AG04449 (cell line): ENCODE measurements at regions of chr10 and their contacts with region 1.

Region 1: DNA sequence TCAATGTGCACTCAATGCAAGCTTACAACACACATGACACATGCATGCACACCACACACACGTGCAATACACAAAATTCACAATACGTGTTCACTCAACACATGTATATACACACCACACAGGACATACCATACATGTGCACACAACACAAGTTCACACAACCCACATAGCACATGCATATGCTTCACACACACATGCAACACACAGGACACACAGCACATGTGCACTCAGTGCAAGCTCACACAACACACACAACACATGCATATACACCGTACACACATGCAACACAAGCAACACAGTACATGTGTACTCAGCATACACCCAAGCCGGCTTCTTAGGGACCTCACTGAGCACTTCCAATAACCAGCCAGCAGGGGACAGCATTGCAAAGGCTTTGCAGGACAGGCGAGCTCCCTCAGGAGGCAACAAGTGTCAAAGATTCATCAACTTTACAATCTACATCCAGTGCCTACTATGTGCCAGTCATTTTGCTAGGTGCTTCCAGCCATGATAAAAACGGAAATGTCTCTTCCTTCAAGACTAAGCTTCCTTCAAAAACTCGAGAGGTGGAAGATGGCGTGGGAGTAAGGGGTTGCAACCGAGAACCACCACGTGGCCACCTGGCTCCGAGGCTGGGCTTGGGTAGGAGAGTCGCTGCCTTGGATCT is 61.1 kb downstream of the JCAD start:
- DNase-seq: no peak
- H3K4me3 ChIP-seq: no peak overlapping the region
- CTCF ChIP-seq: peak; percentile 96

Region 2: DNA sequence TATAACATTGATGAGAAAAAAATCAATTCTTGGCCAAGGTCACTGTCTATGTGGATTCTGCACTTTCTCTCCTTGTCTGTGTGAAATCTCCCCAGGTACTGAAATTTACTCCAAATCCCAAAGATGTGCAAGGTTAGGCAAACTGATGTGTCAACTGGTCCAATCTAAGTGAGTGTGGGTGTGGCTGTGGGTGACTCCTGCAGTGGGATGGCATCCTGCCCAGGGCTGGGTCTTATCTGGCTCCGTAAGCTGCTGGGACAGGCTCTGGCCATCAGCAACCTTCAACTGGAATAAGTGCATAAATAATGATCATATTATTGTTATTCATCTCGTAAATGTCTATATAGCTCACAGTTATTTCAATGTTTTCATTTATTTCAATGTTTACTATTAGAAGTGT is 18.2 kb before region 1 on chr10:
- CTCF ChIA-PET with region 1: interaction called, 164 read pairs
- POLR2A ChIA-PET with region 1: no interaction called
- DNase-seq: no peak
- H3K4me3 ChIP-seq: no peak overlapping the region
- CTCF ChIP-seq: no peak

Region 3: DNA sequence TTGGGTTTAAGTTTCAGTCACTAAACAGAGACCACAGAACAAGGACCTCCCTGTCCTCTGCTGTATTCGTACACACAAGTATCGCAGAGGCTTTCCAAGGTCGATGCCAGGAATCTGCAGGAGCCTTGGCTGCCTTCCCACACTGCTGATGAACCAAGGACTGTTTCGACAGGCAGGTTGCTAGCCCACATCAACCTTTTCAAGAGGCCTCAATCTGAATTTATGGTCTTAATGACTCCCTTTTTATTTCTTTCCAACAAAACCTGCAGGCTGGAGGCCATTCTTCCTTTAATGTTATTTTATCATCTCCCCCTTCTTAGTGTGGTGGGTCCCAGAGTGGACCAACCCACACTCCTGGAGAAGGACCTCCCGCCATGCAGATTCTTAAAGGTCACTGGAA is 15.5 kb after region 1 on chr10:
- CTCF ChIA-PET with region 1: interaction called, 150 read pairs
- POLR2A ChIA-PET with region 1: interaction called, 3 read pairs
- DNase-seq: no peak
- H3K4me3 ChIP-seq: no peak overlapping the region
- CTCF ChIP-seq: no peak

Region 4: DNA sequence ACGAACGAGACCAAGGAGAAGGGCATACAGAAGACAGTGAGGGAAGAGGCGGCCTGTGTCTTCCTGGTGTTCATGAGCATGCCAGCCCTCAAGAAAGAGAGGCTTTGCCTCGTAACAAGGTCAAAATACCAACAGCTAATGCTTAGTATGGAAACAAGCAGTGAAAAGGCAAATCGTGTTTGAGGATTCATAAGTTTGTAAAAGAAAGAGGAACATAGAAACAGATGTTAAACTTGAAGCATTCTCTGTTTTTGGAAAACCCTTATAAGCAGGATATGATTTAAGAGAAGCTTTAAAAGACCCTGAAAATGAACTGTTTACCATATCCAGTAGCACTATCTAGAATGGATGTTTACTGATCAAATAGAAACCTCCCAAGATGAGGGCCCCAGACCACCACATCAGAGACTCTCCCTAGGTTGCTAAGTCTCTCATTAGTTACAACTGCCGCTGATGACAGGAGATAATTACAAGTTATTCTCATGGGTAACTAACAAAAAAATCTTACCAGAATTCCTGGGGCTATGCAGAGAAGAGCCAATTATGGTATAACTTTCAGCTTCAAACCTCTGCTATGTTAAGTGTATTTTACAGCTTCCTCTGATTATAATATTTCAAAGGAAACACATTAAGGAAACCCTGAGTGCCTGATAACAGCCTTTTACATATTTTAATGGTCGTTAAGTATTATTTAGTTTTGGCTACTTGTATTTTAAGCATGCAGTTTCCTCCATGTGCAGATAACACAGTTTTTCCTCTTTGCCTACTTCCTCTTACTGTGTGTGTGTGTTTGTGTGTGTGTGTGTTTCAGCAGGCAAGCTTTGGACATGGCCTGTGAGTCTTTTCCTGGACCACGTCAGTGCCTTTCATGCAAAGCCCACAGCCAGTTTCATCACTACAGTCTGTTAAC is 43.2 kb after region 1 on chr10:
- CTCF ChIA-PET with region 1: interaction called, 11 read pairs
- POLR2A ChIA-PET with region 1: no interaction called
- DNase-seq: no peak
- H3K4me3 ChIP-seq: no peak overlapping the region
- CTCF ChIP-seq: no peak

Region 5: DNA sequence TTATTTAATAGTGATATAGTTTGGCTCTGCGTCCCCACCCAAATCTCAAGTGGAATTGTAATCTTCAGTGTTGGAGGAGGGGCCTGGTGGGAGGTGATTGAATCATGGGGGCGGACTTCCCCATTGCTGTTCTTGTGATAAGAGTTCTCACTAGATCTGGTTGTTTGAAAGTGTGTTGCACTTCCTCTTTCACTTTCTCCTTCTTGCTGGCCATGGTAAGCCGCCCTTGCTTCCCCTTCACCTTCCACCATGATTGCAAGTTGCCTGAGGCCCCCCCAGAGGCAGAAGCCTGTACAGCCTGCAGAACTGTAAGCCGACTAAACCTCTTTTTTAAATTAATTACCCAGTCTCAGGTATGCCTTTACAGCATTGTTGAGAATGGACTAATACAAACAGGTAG is 249.4 kb after region 1 on chr10:
- CTCF ChIA-PET with region 1: interaction called, 119 read pairs
- POLR2A ChIA-PET with region 1: no interaction called
- DNase-seq: no peak
- H3K4me3 ChIP-seq: no peak overlapping the region
- CTCF ChIP-seq: no peak

Region 6: DNA sequence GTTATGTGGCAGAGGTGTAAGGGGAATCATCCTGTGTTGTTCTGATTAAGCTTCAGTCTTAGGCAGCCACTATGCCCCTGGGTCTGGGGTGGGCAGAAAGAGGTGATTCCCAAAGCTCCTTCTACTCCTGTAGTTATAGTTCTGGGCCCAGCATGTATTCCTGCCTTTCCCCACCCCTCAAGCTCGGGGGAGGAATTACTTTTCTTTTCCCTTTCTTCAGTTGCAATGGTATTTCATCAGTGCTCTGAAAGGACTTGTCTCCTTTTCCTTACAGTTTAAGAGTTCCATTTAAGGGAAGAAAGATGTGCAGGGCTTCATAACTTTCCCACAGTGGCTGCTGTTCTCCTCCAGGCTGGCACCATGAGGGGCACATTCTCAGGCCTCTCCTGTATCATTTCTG is 256.7 kb after region 1 on chr10:
- CTCF ChIA-PET with region 1: interaction called, 12 read pairs
- POLR2A ChIA-PET with region 1: no interaction called
- DNase-seq: no peak
- H3K4me3 ChIP-seq: no peak overlapping the region
- CTCF ChIP-seq: no peak

Region 7: GRCh38 chr10:30383356-30383755 is 385.1 kb after region 1 on chr10:
- CTCF ChIA-PET with region 1: interaction called, 11 read pairs
- POLR2A ChIA-PET with region 1: no interaction called
- DNase-seq: no peak
- H3K4me3 ChIP-seq: no peak overlapping the region
- CTCF ChIP-seq: no peak